Sigmoid colon (tissue), 7 donors: ENCODE measurements at regions of chr2 and their contacts with region 1.

Region 1: DNA sequence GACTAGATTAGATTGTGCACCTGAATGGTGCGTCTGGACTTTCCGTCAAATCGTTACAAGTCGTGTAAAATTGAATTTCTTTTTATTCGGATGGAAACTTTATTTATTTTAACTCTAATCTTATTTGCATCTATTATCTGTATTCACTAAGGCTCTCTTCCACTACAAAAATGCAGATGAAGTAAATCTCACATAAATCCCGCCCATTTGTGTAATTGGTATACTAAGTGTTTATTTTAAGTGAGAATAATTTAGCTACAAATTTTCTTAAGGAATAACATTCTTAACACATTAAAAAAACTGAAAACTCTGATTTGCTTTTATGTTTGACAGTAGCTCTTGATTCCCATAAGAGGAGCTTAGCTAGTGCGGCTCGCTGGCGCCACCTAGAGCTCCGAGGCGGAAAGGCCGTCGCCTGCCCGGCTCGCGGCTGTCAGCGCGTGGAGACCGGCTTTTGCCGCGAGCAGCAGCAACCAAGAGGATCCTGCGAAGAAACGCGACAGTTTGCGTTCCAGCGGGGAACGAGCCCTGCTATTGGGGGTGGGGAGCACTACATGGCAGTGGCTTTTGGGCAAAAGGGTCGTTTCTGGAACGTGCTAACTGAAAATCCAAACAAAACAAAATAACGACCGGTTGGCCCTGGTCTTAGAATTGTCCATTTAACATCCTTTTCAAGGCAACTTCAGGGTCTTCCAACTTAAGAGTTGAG is 6.7 kb downstream of the SP9 start:
- DNase-seq: peak; percentile 91
- H3K4me3 ChIP-seq: no peak overlapping the region
- H3K27ac ChIP-seq: no peak overlapping the region
- H3K4me1 ChIP-seq: peaks cover 0 to 49% (median 48%) of the 10 kb centered on the region in 4 donors
- H3K27me3 ChIP-seq: peaks cover 74 to 97% (median 85%) of the 10 kb centered on the region in 3 donors
- CTCF ChIP-seq: peak; percentile 71 to 96 (median 80)
- EP300 ChIP-seq: no peak
- POLR2A ChIP-seq: no peak

Region 2: GRCh38 chr2:173221937-173222594 is 1119.4 kb before region 1 on chr2:
- intact Hi-C with region 1: loop called (anchors 10 kb)
- DNase-seq: no peak
- H3K4me3 ChIP-seq: no peak overlapping the region
- H3K27ac ChIP-seq: no peak overlapping the region
- H3K4me1 ChIP-seq: peaks cover 0 to 30% (median 23%) of the 10 kb centered on the region in 4 donors
- H3K27me3 ChIP-seq: no peaks in the 10 kb centered on the region
- CTCF ChIP-seq: no peak
- EP300 ChIP-seq: no peak
- POLR2A ChIP-seq: no peak

Region 3: GRCh38 chr2:173402405-173402974 is 939.0 kb before region 1 on chr2:
- intact Hi-C with region 1: loop called (anchors 2 kb)
- DNase-seq: peak; percentile 89
- H3K4me3 ChIP-seq: peak overlapping the region in 2 of 4 donors; percentile 20 to 29
- H3K27ac ChIP-seq: no peak overlapping the region
- H3K4me1 ChIP-seq: peaks cover 0 to 15% (median 9%) of the 10 kb centered on the region in 4 donors
- H3K27me3 ChIP-seq: peaks cover 3 to 57% (median 16%) of the 10 kb centered on the region in 3 donors
- CTCF ChIP-seq: peak; percentile 77 to 84 (median 82)
- EP300 ChIP-seq: no peak
- POLR2A ChIP-seq: no peak

Region 4: DNA sequence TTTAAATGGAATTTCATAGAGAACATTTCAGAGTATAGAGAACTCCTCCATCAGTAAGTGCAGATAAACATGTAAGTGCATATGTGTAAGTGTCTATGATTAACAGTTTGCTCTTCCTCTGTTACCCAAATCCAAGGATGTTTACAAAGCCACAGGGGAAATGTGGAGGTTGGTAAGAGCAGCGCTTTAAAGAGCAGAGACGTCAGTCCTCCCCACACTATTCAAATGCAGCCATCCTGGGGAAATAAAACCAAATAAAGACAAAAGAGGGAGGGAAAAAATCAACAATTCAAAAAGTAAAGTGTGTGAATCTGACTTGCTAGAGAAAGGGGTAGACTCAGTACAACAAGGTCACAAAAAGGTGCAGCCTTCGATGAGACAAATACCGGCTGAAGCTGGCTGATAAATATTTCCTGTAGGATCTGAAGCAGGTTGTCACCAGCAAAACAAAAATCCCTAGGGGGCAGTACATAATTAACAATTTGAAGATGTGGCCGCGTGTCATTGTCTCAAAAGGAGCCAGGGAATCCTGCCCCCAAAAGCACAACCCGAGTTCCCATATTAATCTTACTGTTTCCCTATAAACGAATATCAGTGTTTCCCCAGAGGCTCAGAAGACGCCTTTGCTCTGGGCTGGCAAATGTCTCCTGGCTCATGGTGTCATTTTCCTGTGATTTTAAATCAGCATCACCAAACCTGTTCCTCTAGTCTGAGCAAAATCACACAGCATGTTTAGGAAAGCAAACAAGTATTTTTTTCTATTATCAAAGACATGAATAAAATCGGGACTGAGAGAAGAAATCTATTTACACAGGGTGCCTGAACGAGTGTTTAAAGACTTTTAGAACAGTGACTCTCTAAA is 770.2 kb before region 1 on chr2:
- intact Hi-C with region 1: loop called (anchors 10 kb)
- DNase-seq: no peak
- H3K4me3 ChIP-seq: no peak overlapping the region
- H3K27ac ChIP-seq: no peak overlapping the region
- H3K4me1 ChIP-seq: peaks cover 0 to 3% (median 0%) of the 10 kb centered on the region in 4 donors
- H3K27me3 ChIP-seq: no peaks in the 10 kb centered on the region
- CTCF ChIP-seq: peak in 1 of 4 experiments; percentile 29
- EP300 ChIP-seq: no peak
- POLR2A ChIP-seq: no peak

Region 5: GRCh38 chr2:173884025-173884802 is 457.2 kb before region 1 on chr2:
- intact Hi-C with region 1: loop called (anchors 2 kb)
- DNase-seq: peak; percentile 70
- H3K4me3 ChIP-seq: no peak overlapping the region
- H3K27ac ChIP-seq: no peak overlapping the region
- H3K4me1 ChIP-seq: no peaks in the 10 kb centered on the region
- H3K27me3 ChIP-seq: peaks cover 0 to 1% (median 0%) of the 10 kb centered on the region in 3 donors
- CTCF ChIP-seq: peak in 3 of 4 experiments; percentile 11 to 57 (median 32)
- EP300 ChIP-seq: no peak
- POLR2A ChIP-seq: no peak

Region 6: DNA sequence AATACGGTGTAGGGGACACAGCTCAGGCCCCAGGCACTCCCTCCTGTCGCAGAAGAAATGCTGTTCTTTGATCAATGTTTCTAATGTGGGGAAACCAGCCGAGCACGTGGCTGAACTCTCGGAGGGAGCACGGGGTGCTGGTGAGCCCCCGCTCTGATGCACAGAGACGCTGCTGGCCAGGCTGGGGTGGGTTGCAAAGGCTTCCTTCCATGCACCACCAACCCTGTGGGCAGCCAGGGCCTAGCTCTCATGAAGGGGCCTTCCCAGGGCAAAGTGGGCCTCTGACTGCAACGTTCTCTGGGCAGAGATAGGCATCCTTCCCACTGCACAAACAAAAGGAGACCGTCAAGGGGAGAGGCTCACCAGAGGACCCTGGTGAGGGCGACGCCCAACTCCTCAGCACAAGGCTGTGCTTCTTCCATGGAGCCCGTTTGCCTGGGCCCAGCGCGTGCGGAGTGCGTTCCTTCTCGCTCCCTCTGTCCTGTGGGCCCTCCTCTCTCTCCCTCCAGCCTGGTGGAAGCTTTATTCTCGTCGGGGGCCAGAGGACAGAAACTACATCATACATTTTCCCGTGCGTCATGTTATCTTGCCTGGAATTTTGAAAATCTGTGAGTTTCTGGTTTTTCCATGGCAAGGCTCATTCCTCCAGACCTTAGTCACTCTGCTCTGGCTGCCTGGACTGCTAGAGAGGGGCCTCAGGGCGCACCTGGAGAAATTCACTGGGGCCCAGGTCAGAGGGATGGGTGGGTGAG is 315.1 kb before region 1 on chr2:
- intact Hi-C with region 1: no loop called
- DNase-seq: no peak
- H3K4me3 ChIP-seq: no peak overlapping the region
- H3K27ac ChIP-seq: peak overlapping the region; percentile 69 to 83 (median 75)
- H3K4me1 ChIP-seq: peaks cover 0 to 37% (median 26%) of the 10 kb centered on the region in 4 donors
- H3K27me3 ChIP-seq: no peaks in the 10 kb centered on the region
- CTCF ChIP-seq: no peak
- EP300 ChIP-seq: no peak
- POLR2A ChIP-seq: no peak

Region 7: GRCh38 chr2:174158003-174158402 is 183.4 kb before region 1 on chr2:
- intact Hi-C with region 1: loop called (anchors 5 kb)
- DNase-seq: no peak
- H3K4me3 ChIP-seq: no peak overlapping the region
- H3K27ac ChIP-seq: no peak overlapping the region
- H3K4me1 ChIP-seq: peaks cover 0 to 8% (median 2%) of the 10 kb centered on the region in 4 donors
- H3K27me3 ChIP-seq: no peaks in the 10 kb centered on the region
- CTCF ChIP-seq: peak in 1 of 4 experiments; percentile 24
- EP300 ChIP-seq: no peak
- POLR2A ChIP-seq: no peak

Region 8: GRCh38 chr2:174248187-174248997 is 93.0 kb before region 1 on chr2 and contains the start of gene OLA1:
- intact Hi-C with region 1: loop called (anchors 5 kb)
- DNase-seq: peak; percentile 96
- H3K4me3 ChIP-seq: peak within 1 kb of the TSS; percentile 72 to 84 (median 78)
- H3K27ac ChIP-seq: peak within 1 kb of the TSS; percentile 81 to 88 (median 84)
- H3K4me1 ChIP-seq: peaks cover 0 to 19% (median 9%) of the 10 kb centered on the region in 4 donors
- H3K27me3 ChIP-seq: no peaks in the 10 kb centered on the region
- CTCF ChIP-seq: no peak
- EP300 ChIP-seq: no peak
- POLR2A ChIP-seq: no peak
- total RNA-seq, gene OLA1: 51.5 to 67.6 (median 54.4) TPM

Region 9: DNA sequence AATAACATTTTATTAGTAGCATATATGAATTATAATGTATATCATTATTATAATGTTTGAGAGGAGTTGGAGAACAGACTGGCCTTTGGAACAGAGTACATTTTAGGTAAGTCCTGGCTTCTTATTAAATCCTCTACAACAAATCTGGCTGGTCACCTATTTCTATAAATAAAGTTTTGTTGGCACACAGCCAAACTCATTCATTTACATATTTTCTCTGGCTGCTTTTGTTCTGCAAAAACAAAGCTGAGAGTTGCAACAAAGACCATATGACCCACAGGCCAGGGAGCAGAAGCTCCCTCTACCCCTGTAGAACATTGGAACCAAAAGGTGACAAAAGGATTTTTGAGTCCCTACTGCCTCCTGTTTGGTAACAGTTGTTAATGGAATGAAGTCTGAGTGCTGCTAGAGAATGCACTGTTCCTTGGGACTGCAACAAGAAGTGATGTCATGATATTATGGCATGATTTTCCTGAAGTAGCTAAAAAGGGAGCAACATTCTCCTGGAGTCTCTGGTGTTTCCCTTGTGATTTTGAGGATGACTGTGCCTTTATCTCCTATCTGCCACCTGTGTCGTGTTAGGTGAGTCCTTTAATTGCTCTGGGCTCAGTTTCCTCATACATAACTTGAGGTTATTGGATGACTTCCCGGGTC is 28.7 kb before region 1 on chr2:
- intact Hi-C with region 1: no loop called
- DNase-seq: no peak
- H3K4me3 ChIP-seq: no peak overlapping the region
- H3K27ac ChIP-seq: no peak overlapping the region
- H3K4me1 ChIP-seq: no peaks in the 10 kb centered on the region
- H3K27me3 ChIP-seq: peaks cover 0 to 4% (median 4%) of the 10 kb centered on the region in 3 donors
- CTCF ChIP-seq: no peak
- EP300 ChIP-seq: no peak
- POLR2A ChIP-seq: no peak